MCF 10A (cell line): ENCODE measurements at regions of chr16 and their contacts with region 1.

Region 1: DNA sequence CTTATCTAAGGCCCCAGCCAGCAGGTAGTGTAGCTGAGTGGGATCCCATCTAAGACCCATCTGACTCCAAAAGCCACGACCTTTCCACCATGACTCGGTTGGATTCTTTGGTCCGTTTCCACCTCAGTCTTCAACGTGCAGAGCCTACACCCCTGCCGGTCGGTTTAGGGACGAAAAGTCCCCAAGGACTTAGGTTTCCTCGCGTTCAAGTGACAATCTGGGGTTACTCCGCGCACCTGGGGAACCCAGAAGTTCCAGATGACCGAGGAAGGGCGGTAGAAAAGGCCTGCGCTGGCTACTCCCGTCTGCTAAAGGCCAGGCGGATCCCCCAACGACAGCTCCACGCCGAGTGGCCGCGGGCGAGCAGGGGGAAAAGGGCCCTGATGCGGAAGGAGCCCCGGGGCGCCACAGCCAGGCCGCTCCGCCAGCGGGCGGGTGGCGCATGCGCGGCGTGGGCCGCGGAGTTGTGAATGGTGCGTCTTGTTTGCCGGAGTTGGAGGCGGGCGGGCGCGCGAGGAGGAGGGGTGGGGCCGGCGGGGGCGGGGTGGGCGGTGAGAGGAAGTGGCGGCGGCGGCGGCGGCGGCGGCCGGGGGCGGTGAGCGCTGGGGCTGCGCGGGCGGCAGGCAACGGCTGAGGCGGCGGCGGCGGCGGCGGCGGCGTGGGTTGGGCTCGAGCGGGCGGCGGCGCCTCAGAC is at the start of gene CBFB:
- DNase-seq: peak; percentile 87
- H3K4me3 Mint-ChIP-seq: peak within 1 kb of the TSS; percentile 76
- H3K27ac Mint-ChIP-seq: peak within 1 kb of the TSS; percentile 35
- H3K4me1 Mint-ChIP-seq: no peaks in the 10 kb centered on the region
- H3K27me3 Mint-ChIP-seq: no peaks in the 10 kb centered on the region
- CTCF ChIP-seq: no peak
- total RNA-seq, gene CBFB: 87.1 and 105 TPM in 2 replicates

Region 2: DNA sequence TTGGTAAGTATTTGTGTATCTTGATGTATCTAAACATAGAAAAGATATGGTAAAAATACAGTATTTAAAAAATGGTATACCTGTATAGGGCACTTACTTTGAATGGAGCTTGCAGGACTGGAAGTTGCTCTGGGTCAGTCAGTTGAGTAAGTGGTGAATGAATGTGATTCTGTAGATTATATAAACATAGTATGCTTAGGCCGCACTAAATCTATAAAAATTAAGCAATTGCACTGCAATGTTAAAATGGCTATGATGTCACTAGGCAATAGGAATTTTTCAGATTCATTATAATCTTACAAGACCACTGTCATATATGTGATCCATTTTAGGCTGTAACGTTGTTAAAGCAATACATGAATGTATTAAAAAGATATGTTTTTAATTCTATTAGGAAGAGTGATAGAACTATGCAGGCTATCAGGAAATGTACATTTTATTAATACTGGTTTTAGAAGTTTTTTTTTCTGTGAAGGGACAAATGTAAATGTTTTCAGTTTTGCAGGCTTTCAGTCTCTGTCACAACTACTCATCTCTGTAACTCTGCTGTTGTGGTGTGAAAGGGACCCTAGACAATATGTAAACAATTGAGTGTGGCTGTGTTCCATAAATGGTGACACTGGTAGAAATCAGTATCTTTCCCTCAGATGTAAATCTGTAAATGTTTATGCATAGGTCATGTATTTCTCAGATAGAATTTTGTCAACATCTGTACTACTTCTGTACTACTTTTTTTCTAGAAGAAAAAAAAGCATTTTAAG is 10.7 kb after region 1 on chr16:
- CTCF ChIA-PET with region 1: interaction called, 5 read pairs
- POLR2A ChIA-PET with region 1: interaction called, 24 read pairs
- intact Hi-C with region 1: no loop called
- DNase-seq: no peak
- H3K4me3 Mint-ChIP-seq: no peak overlapping the region
- H3K27ac Mint-ChIP-seq: no peak overlapping the region
- H3K4me1 Mint-ChIP-seq: peaks cover 8% of the 10 kb centered on the region
- H3K27me3 Mint-ChIP-seq: no peaks in the 10 kb centered on the region
- CTCF ChIP-seq: no peak

Region 3: DNA sequence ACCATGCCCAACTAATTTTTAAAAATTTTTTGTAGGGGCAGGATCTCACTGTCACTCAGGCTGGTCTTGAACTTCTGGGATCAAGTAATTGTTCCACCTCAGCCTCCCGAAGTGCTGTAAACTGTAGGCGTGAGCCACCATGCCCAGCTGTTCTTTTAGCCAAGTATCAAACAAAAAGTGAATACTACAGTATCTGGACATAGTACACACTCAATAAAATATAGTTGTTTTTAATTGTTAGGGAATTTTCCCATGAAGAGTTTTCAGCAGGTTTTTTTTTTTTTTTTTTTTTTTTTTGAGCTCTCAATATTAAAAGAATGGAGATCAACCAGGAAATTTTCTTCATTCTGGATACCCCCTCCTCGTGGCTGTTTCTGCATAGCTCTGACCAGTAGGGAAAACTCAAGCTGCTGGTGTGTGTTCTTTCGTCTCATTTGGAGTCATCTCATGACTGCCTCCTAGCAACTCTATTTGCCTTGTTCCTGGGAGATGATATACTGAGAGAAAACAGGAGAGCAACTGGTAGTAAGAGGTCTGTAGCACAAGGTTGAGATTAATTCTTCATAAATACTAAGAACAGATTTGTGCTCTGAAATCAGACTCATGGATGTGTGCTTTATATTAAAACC is 64.5 kb after region 1 on chr16:
- CTCF ChIA-PET with region 1: no interaction called
- POLR2A ChIA-PET with region 1: no interaction called
- intact Hi-C with region 1: no loop called
- DNase-seq: no peak
- H3K4me3 Mint-ChIP-seq: no peak overlapping the region
- H3K27ac Mint-ChIP-seq: no peak overlapping the region
- H3K4me1 Mint-ChIP-seq: no peaks in the 10 kb centered on the region
- H3K27me3 Mint-ChIP-seq: no peaks in the 10 kb centered on the region
- CTCF ChIP-seq: no peak

Region 4: GRCh38 chr16:67191995-67192681 is 163.4 kb after region 1 on chr16 and contains the start of gene E2F4:
- CTCF ChIA-PET with region 1: no interaction called
- POLR2A ChIA-PET with region 1: no interaction called
- intact Hi-C with region 1: no loop called
- DNase-seq: peak; percentile 88
- H3K4me3 Mint-ChIP-seq: peak within 1 kb of the TSS; percentile 77
- H3K27ac Mint-ChIP-seq: peak within 1 kb of the TSS; percentile 78
- H3K4me1 Mint-ChIP-seq: peaks cover 22% of the 10 kb centered on the region
- H3K27me3 Mint-ChIP-seq: no peaks in the 10 kb centered on the region
- CTCF ChIP-seq: no peak
- total RNA-seq, gene E2F4: 81.0 and 85.5 TPM in 2 replicates

Region 5: DNA sequence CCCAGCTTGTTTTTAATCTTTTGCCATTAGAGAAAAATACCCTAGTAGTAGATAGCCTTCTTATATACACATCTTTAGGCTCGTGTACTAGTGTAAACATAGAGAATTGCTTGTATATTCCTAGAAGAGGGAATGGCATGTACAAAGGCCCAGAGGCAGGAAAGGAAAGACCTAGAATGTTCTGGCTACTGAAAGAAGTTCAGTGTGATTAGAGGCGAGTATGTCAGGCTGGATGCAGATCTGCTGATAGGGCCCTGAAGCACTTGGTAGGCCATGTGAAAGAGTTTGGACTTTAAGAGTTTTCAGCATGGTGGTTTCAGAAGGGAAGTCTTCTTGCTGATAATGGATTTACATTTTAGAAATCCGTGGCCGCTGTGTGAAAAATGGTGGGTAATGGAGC is 551.0 kb after region 1 on chr16:
- CTCF ChIA-PET with region 1: no interaction called
- POLR2A ChIA-PET with region 1: no interaction called
- intact Hi-C with region 1: no loop called
- DNase-seq: no peak
- H3K4me3 Mint-ChIP-seq: no peak overlapping the region
- H3K27ac Mint-ChIP-seq: no peak overlapping the region
- H3K4me1 Mint-ChIP-seq: no peaks in the 10 kb centered on the region
- H3K27me3 Mint-ChIP-seq: no peaks in the 10 kb centered on the region
- CTCF ChIP-seq: no peak